Activated CD4-positive, alpha-beta T cell treated with anti-CD3 and anti-CD28 coated beads, Interleukin-2, amount 10 ng/mL, durations not matched to agents 7 days and 5 days (primary cell): ENCODE measurements at regions of chr9 and their contacts with region 1.

Region 1: DNA sequence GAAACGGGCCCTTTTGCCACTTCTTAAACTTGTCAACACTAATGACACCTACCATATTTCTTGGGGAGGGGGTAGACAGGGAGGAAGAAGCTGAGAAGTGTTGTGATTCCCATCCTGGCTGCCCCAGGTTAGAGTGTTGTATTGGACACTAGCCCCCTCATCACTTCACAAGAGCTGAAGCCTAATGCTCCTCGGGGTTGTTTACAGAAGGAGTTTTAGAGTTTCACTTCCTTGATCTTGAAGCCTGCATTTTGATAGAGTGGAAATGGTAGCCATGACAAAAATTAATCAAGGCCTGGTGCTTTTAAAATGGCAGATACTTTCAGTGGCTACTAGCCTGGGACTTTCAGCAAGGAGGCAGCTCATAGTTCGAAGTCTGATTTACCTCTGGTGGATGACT is 11.0 kb upstream of the FAM120AOS start:
- DNase-seq: no peak
- H3K4me3 Mint-ChIP-seq: peak overlapping the region; percentile 52
- H3K27ac Mint-ChIP-seq: peak overlapping the region; percentile 89
- H3K4me1 Mint-ChIP-seq: peaks cover 83% of the 10 kb centered on the region
- H3K27me3 Mint-ChIP-seq: no peaks in the 10 kb centered on the region

Region 2: DNA sequence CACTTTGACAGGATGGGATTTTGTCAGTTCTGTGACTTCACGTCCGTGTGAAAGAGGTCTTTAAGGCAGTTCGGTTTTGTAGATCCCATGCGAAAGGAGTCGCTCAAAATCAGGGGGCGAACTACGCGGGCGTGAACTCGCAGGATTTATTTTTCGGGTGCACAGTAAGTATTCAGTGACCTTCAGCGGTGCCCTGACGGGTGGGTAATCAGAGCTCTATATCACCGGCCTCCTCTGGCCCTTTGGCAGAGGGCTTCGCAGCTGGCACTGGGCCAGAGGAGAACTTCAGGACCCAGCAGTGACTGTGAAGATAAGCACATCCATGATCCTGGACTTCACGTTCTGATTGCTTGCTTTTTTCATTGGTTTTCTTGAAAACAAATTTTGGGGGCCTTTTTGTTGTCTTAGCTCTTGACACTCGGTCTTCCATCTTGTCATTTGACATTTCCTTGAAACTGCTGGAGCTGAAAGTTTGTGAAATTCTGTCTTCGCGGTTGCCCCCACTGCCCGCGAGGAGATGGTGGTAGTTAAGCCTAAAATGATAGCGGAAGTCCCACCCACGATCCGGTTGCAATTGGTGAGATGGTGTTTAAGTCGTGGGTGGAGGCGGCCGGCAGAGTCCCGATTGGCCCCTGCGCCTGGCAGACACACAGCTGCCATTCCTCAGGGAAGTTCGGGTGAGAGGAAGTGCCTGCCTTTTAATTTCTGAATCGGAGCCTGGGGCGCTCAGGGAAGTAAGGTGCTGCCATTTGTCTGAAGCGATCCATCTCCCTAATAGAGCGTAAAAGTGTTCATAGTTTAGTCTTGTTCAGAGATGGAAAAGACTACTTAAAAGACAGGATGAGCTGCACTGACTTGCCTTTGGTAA is 11.1 kb before region 1 on chr9 and contains the start of gene FAM120AOS:
- CTCF ChIA-PET with region 1: interaction called, 23 read pairs
- POLR2A ChIA-PET with region 1: interaction called, 3 read pairs
- DNase-seq: peak; percentile 88
- H3K4me3 Mint-ChIP-seq: peak within 1 kb of the TSS; percentile 93
- H3K27ac Mint-ChIP-seq: peak within 1 kb of the TSS; percentile 95
- H3K4me1 Mint-ChIP-seq: peaks cover 52% of the 10 kb centered on the region
- H3K27me3 Mint-ChIP-seq: no peaks in the 10 kb centered on the region
- total RNA-seq, gene FAM120AOS: 34.9 to 35.4 TPM

Region 3: DNA sequence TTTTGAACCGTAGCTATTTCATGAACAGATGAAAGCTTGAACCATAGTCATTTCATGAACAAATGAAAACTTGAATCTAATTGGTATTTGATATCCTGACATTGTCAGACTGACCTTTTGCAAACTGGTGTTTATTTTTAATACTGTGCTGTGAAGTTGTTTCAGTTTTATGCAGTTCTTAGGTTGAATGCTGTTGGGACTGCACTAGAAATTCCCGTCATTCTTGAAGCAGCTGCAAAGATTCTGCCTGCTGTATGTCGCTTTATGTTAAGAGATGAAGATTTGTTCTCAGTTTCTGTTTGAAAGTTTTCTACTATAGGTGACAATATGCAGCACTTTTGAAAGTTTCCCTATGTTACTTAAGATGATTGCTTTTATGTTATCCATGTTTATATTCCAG is 11.5 kb after region 1 on chr9:
- CTCF ChIA-PET with region 1: interaction called, 10 read pairs
- POLR2A ChIA-PET with region 1: no interaction called
- DNase-seq: no peak
- H3K4me3 Mint-ChIP-seq: no peak overlapping the region
- H3K27ac Mint-ChIP-seq: no peak overlapping the region
- H3K4me1 Mint-ChIP-seq: peaks cover 22% of the 10 kb centered on the region
- H3K27me3 Mint-ChIP-seq: no peaks in the 10 kb centered on the region